B cell (primary cell): ENCODE measurements at regions of chrX and their contacts with region 1.

Region 1: DNA sequence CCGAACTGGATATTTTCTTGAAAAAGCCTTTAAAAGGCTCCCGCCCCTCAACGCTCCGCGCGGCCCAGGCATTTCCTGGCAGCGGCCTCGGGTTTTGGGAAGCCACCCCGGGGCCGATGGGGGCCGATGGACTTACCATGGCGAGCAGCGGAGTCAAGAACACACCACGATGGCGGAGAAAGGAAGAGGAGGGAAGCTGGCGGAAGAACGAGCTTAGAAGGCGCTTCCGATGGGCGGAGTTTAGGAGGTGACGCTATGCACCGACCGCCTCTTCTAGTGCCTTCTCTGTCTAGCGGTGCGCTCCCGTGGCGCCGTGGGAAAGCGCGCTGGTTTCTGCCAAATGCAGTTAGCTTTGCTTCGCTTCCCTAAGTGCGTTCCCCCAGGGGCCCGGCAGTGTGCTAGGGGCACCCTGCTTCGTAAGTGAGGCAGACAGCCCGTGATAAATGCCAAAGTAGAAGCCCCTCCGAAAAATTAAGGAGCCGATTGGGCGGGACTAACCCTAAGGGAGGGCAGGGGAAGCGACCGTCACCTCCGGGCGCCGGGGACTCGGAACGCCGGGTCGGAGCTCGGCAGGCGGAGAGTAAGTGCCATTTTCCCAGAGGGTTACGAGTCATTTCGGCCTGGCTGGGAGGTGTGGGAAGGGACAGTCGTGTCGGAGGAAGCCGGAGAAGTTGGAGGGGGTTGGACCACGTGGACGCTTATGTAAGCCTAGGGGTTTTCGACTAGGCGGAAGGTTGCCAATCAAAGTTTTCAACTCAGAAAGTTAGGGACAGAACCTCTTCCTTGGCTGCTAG is at the start of gene RPL39:
- DNase-seq: peak; percentile 90
- ATAC-seq: peak; percentile 93
- H3K4me3 ChIP-seq: peak within 1 kb of the TSS; percentile 72 to 95 (median 75)
- H3K4me3 Mint-ChIP-seq: peak within 1 kb of the TSS; percentile 96
- H3K27ac ChIP-seq: peak within 1 kb of the TSS; percentile 96
- H3K27ac Mint-ChIP-seq: peak within 1 kb of the TSS; percentile 96
- H3K4me1 ChIP-seq: peaks cover 16 to 35% of the 10 kb centered on the region in 2 donors
- H3K4me1 Mint-ChIP-seq: peaks cover 34% of the 10 kb centered on the region
- H3K27me3 ChIP-seq: no peaks in the 10 kb centered on the region
- H3K27me3 Mint-ChIP-seq: no peaks in the 10 kb centered on the region
- CTCF ChIP-seq: no peak
- total RNA-seq, gene RPL39: 3,259 and 3,356 TPM in 2 replicates

Region 2: GRCh38 chrX:119574394-119575266 is 217.0 kb before region 1 on chrX and contains the start of gene UBE2A:
- CTCF ChIA-PET with region 1: no interaction called
- POLR2A ChIA-PET with region 1: interaction called, 11 read pairs
- intact Hi-C with region 1: no loop called
- DNase-seq: peak; percentile 94
- ATAC-seq: peak; percentile 94
- H3K4me3 ChIP-seq: peak within 1 kb of the TSS; percentile 42 to 77 (median 70)
- H3K4me3 Mint-ChIP-seq: peak within 1 kb of the TSS; percentile 88
- H3K27ac ChIP-seq: peak within 1 kb of the TSS; percentile 68 to 83
- H3K27ac Mint-ChIP-seq: peak within 1 kb of the TSS; percentile 88
- H3K4me1 ChIP-seq: peaks cover 26 to 32% of the 10 kb centered on the region in 2 donors
- H3K4me1 Mint-ChIP-seq: peaks cover 34% of the 10 kb centered on the region
- H3K27me3 ChIP-seq: no peaks in the 10 kb centered on the region
- H3K27me3 Mint-ChIP-seq: no peaks in the 10 kb centered on the region
- CTCF ChIP-seq: no peak
- total RNA-seq, gene UBE2A: 67.1 and 70.9 TPM in 2 replicates

Region 3: DNA sequence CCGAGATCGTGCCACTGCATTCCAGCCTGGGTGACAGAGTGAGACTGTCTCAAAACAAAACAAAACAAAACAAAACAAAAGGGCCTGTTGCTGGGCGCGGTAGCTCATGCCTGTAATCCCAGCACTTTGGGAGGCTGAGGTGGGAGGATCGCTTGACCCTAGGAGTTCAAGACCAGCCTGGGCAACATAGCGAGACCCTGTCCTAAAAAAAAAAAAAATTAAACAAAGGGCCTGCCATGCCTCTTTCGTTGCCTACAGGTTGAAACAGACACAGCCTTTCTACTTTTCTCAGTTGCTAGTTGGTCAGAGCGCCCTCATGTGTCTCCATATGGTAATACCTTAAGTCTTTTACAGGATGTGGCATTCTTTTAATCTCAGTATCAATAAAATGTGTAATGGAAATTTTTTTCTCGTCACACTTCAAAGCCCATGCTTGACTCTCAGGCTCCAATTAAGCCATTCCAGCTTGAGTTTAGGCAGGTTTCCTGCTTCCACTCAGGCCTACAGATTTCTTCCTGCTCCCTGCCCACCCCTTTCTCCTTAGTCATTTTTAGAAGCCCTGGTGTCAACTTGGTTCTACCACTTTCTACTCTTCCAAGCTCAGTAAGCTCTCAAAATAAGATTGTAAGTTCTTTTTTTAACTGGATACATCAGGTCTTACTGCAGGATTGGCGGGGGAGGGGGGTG is 37.9 kb before region 1 on chrX:
- CTCF ChIA-PET with region 1: interaction called, 6 read pairs
- POLR2A ChIA-PET with region 1: no interaction called
- intact Hi-C with region 1: loop called (anchors 5 kb)
- DNase-seq: peak; percentile 69
- ATAC-seq: peak; percentile 11
- H3K4me3 ChIP-seq: no peak overlapping the region
- H3K4me3 Mint-ChIP-seq: peak overlapping the region; percentile 59
- H3K27ac ChIP-seq: peak overlapping the region; percentile 37 to 89
- H3K27ac Mint-ChIP-seq: peak overlapping the region; percentile 96
- H3K4me1 ChIP-seq: peaks cover 43 to 47% of the 10 kb centered on the region in 2 donors
- H3K4me1 Mint-ChIP-seq: peaks cover 41% of the 10 kb centered on the region
- H3K27me3 ChIP-seq: no peaks in the 10 kb centered on the region
- H3K27me3 Mint-ChIP-seq: no peaks in the 10 kb centered on the region
- CTCF ChIP-seq: peak; percentile 63

Region 4: GRCh38 chrX:119852382-119853353 is 61.0 kb after region 1 on chrX and contains the start of gene UPF3B:
- CTCF ChIA-PET with region 1: interaction called, 6 read pairs
- POLR2A ChIA-PET with region 1: interaction called, 12 read pairs
- intact Hi-C with region 1: loop called (anchors 1 kb)
- DNase-seq: peak; percentile 95
- ATAC-seq: peak; percentile 96
- H3K4me3 ChIP-seq: peak within 1 kb of the TSS; percentile 69 to 93 (median 84)
- H3K4me3 Mint-ChIP-seq: peak within 1 kb of the TSS; percentile 98
- H3K27ac ChIP-seq: peak within 1 kb of the TSS; percentile 92 to 93
- H3K27ac Mint-ChIP-seq: peak within 1 kb of the TSS; percentile 97
- H3K4me1 ChIP-seq: peaks cover 0 to 11% of the 10 kb centered on the region in 2 donors
- H3K4me1 Mint-ChIP-seq: peaks cover 15% of the 10 kb centered on the region
- H3K27me3 ChIP-seq: no peaks in the 10 kb centered on the region
- H3K27me3 Mint-ChIP-seq: no peaks in the 10 kb centered on the region
- CTCF ChIP-seq: no peak
- total RNA-seq, gene UPF3B: 20.4 and 22.1 TPM in 2 replicates

Region 5: DNA sequence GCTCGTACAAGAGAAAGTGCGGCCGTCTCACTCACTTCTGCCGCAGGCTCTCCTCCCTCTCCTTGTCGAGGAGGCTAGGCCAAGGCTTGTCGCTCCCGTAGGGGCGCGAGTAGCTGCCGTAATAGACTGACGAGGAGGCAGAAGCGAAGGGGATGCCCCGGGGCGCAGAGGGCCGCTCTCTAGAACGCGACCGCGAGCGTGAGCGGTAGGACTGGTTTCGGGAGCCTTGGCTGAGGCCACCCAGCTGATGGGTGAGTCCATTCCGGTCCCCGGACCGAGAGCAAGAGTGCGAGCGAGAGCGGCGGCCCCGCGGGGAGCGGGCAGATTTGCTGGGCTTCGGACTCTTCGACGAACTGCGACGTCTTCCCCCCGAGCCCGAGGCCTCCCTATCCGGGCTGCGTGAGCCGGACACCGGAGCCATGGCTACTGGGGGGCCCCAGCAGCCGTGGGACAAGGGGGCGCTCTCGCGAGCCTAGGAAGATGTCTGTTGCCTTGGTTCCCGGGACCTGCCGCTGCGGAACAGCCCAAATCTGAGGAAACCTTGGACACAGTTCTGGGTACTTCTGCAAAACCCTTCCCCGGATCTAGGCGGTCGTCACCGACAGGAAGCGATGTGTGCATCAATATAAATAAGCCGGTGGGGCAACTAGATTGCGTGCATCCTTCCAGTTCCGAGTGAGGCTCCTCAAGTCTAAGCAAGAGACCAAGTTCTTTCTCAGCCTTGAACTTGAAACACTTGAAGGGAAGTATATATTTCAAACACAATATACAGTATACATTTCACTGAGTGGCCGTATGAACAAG is 151.8 kb after region 1 on chrX and contains the start of gene NKAP:
- CTCF ChIA-PET with region 1: no interaction called
- POLR2A ChIA-PET with region 1: no interaction called
- intact Hi-C with region 1: loop called (anchors 1 kb)
- DNase-seq: peak; percentile 90
- ATAC-seq: peak; percentile 88
- H3K4me3 ChIP-seq: peak within 1 kb of the TSS; percentile 56 to 91 (median 75)
- H3K4me3 Mint-ChIP-seq: peak within 1 kb of the TSS; percentile 96
- H3K27ac ChIP-seq: peak within 1 kb of the TSS; percentile 86 to 88
- H3K27ac Mint-ChIP-seq: peak within 1 kb of the TSS; percentile 94
- H3K4me1 ChIP-seq: peaks cover 15 to 21% of the 10 kb centered on the region in 2 donors
- H3K4me1 Mint-ChIP-seq: peaks cover 18% of the 10 kb centered on the region
- H3K27me3 ChIP-seq: no peaks in the 10 kb centered on the region
- H3K27me3 Mint-ChIP-seq: peaks cover 1% of the 10 kb centered on the region
- CTCF ChIP-seq: no peak
- total RNA-seq, gene NKAP: 17.9 TPM in 2 replicates